Endothelial cell of umbilical vein (primary cell): ENCODE measurements at regions of chr12 and their contacts with region 1.

Region 1: DNA sequence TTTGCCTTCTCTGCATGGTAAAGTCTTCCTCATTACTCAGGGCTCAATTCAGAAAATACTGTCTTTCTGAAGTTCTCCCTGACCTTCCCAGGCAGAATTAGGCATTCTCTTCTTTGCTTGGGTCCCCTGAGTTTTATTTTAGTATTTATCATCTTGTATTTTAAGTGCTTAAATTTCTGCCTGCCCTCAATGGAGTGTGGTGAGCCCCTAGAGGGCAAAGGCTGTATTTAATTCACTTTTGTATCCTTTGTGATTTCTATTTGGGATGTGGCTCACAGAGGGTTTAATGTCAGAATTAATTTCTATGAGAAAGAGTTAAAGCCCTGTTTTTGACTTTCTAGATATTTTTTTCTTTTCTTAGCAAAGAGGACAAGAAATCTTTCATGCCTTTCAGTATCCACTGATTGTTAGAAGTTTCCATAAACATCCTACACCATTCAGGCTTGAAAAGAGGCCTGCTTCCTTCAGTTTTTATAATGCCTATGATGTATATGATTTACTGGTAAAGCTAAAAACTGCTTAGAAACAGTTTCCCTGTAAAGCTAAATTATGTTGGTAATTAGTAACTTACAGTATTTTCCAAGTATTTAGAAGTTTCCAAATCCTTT is 55.6 kb upstream of the PTPRB start:
- DNase-seq: peak; percentile 73
- H3K4me3 ChIP-seq: no peak overlapping the region
- H3K27ac ChIP-seq: no peak overlapping the region
- H3K4me1 ChIP-seq: peaks cover 16% of the 10 kb centered on the region
- H3K27me3 ChIP-seq: no peaks in the 10 kb centered on the region
- CTCF ChIP-seq: peak; percentile 53 to 55
- POLR2A ChIP-seq: no peak

Region 2: GRCh38 chr12:69835083-69835482 is 857.7 kb before region 1 on chr12:
- CTCF ChIA-PET with region 1: no interaction called
- POLR2A ChIA-PET with region 1: no interaction called
- dilution Hi-C with region 1: no loop called
- intact Hi-C with region 1: no loop called
- DNase-seq: no peak
- H3K4me3 ChIP-seq: no peak overlapping the region
- H3K27ac ChIP-seq: no peak overlapping the region
- H3K4me1 ChIP-seq: no peaks in the 10 kb centered on the region
- H3K27me3 ChIP-seq: peaks cover 0 to 1% of the 10 kb centered on the region in 2 experiments
- CTCF ChIP-seq: no peak
- POLR2A ChIP-seq: no peak

Region 3: DNA sequence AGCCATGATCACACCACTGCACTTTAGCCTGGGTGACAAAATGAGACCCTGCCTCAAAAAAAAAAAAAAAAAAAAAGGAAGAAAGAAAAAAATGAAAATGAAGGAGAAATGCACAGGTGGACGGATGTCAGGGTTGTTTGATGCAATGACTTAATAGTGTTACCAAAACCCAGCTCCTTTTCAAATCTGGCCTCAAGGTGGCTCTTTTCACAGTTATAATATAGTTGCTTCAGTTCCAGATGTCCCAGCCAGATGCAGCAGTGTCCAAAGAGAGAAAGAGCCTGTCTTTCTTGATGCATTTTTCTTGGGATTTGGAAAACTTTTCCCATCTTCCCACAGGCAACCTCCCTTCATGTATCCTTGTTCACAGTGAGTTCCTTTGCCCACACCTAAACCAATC is 290.2 kb before region 1 on chr12:
- CTCF ChIA-PET with region 1: no interaction called
- POLR2A ChIA-PET with region 1: no interaction called
- dilution Hi-C with region 1: no loop called
- intact Hi-C with region 1: no loop called
- DNase-seq: no peak
- H3K4me3 ChIP-seq: no peak overlapping the region
- H3K27ac ChIP-seq: no peak overlapping the region
- H3K4me1 ChIP-seq: no peaks in the 10 kb centered on the region
- H3K27me3 ChIP-seq: peaks cover 2 to 4% of the 10 kb centered on the region in 2 experiments
- CTCF ChIP-seq: no peak
- POLR2A ChIP-seq: no peak

Region 4: DNA sequence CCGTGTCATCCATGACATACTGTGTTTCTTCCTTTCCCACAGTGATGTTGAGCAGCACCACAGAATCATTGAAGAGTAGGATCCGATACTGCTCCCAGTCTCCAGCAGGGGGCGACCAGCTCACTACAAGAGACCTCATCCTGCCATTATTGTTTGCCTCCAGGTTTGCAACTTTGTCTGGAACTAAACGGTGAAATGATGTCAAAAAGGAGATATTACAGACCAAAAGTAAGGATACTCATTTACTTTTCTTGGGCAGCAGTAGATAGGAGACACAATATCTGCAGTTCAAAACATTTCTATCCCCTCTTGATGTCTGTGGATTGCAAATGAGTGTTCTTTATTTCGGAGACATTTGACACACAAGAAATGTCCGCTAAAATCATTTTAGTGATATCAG is 102.7 kb before region 1 on chr12:
- CTCF ChIA-PET with region 1: interaction called, 3 read pairs
- POLR2A ChIA-PET with region 1: no interaction called
- dilution Hi-C with region 1: no loop called
- intact Hi-C with region 1: loop called (anchors 1 kb)
- DNase-seq: peak; percentile 80
- H3K4me3 ChIP-seq: no peak overlapping the region
- H3K27ac ChIP-seq: no peak overlapping the region
- H3K4me1 ChIP-seq: no peaks in the 10 kb centered on the region
- H3K27me3 ChIP-seq: no peaks in the 10 kb centered on the region
- CTCF ChIP-seq: peak; percentile 82 to 88
- POLR2A ChIP-seq: no peak

Region 5: GRCh38 chr12:70609711-70610491 is 82.9 kb before region 1 on chr12:
- CTCF ChIA-PET with region 1: interaction called, 6 read pairs
- POLR2A ChIA-PET with region 1: no interaction called
- dilution Hi-C with region 1: no loop called
- intact Hi-C with region 1: loop called (anchors 1 kb)
- DNase-seq: peak; percentile 79
- H3K4me3 ChIP-seq: peak overlapping the region; percentile 33 to 49 (median 37)
- H3K27ac ChIP-seq: peak overlapping the region; percentile 77
- H3K4me1 ChIP-seq: peaks cover 67% of the 10 kb centered on the region
- H3K27me3 ChIP-seq: no peaks in the 10 kb centered on the region
- CTCF ChIP-seq: no peak
- POLR2A ChIP-seq: peak; percentile 45

Region 6: GRCh38 chr12:70645494-70646317 is 47.1 kb before region 1 on chr12:
- CTCF ChIA-PET with region 1: interaction called, 3 read pairs
- POLR2A ChIA-PET with region 1: no interaction called
- dilution Hi-C with region 1: no loop called
- intact Hi-C with region 1: loop called (anchors 1 kb)
- DNase-seq: peak; percentile 95
- H3K4me3 ChIP-seq: no peak overlapping the region
- H3K27ac ChIP-seq: peak overlapping the region; percentile 99
- H3K4me1 ChIP-seq: peaks cover 54% of the 10 kb centered on the region
- H3K27me3 ChIP-seq: no peaks in the 10 kb centered on the region
- CTCF ChIP-seq: no peak
- POLR2A ChIP-seq: peak; percentile 70

Region 7: GRCh38 chr12:70671698-70672097 is 21.1 kb before region 1 on chr12:
- CTCF ChIA-PET with region 1: interaction called, 4 read pairs
- POLR2A ChIA-PET with region 1: no interaction called
- dilution Hi-C with region 1: no loop called
- intact Hi-C with region 1: loop called (anchors 2 kb)
- DNase-seq: no peak
- H3K4me3 ChIP-seq: no peak overlapping the region
- H3K27ac ChIP-seq: peak overlapping the region; percentile 39
- H3K4me1 ChIP-seq: peaks cover 12% of the 10 kb centered on the region
- H3K27me3 ChIP-seq: no peaks in the 10 kb centered on the region
- CTCF ChIP-seq: no peak
- POLR2A ChIP-seq: no peak

Region 8: GRCh38 chr12:70798016-70798783 is 105.4 kb after region 1 on chr12:
- CTCF ChIA-PET with region 1: no interaction called
- POLR2A ChIA-PET with region 1: no interaction called
- dilution Hi-C with region 1: no loop called
- intact Hi-C with region 1: no loop called
- DNase-seq: no peak
- H3K4me3 ChIP-seq: no peak overlapping the region
- H3K27ac ChIP-seq: no peak overlapping the region
- H3K4me1 ChIP-seq: no peaks in the 10 kb centered on the region
- H3K27me3 ChIP-seq: peaks cover 0 to 2% of the 10 kb centered on the region in 2 experiments
- CTCF ChIP-seq: no peak
- POLR2A ChIP-seq: no peak